Activated T-helper 2 cell treated with anti-CD3 and anti-CD28 coated beads, Interferon-gamma antibody, Interleukin-2, Interleukin-4, amounts not matched to agents 10 μg/mL and 5 μg/mL and 100 μg/mL, durations not matched to agents 14 hours and 24 hours and 36 hours (primary cell): ENCODE measurements at regions of chr7 and their contacts with region 1.

Region 1: GRCh38 chr7:48251766-48252165 is 80.5 kb downstream of the ABCA13 start:
- DNase-seq: no peak
- H3K4me3 Mint-ChIP-seq: no peak overlapping the region
- H3K27ac Mint-ChIP-seq: peak overlapping the region; percentile 26
- H3K4me1 Mint-ChIP-seq: peaks cover 30% of the 10 kb centered on the region
- H3K27me3 Mint-ChIP-seq: peaks cover 3% of the 10 kb centered on the region

Region 2: GRCh38 chr7:48130658-48131108 is 121.1 kb before region 1 on chr7:
- intact Hi-C with region 1: loop called (anchors 5 kb)
- DNase-seq: no peak
- H3K4me3 Mint-ChIP-seq: no peak overlapping the region
- H3K27ac Mint-ChIP-seq: no peak overlapping the region
- H3K4me1 Mint-ChIP-seq: peaks cover 10% of the 10 kb centered on the region
- H3K27me3 Mint-ChIP-seq: peaks cover 17% of the 10 kb centered on the region

Region 3: DNA sequence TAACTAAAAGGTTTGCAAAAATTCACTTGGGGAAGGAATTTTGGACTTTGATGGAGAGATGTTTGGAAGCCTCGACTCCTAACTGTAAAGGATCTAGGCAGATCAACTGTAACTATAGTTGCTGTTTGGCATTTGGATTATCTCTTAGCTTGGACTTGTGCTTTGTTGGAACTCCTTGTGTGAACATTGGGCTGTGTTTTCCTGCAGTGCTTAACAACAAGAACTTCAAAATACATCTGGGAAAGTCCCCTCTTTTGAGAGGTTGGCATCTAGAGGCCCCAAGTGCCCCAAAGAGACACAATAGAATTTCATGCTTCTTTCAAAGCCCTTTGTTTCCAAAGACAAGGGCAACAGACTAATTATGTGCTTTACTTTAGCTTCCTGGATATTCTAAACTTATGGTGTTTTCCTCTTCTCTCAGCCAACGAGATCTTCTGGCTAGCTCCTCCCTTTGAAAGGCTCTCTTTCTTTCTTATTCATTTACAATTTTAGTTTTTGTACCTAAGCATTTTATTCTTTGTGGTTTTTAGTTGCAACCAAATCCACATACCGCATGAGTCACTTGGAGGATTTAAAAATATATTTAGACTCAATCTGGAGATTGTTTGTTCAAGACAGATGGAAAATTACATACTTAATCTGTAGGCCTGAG is 68.9 kb before region 1 on chr7:
- intact Hi-C with region 1: loop called (anchors 5 kb)
- DNase-seq: no peak
- H3K4me3 Mint-ChIP-seq: no peak overlapping the region
- H3K27ac Mint-ChIP-seq: peak overlapping the region; percentile 31
- H3K4me1 Mint-ChIP-seq: peaks cover 14% of the 10 kb centered on the region
- H3K27me3 Mint-ChIP-seq: peaks cover 11% of the 10 kb centered on the region